ENCODE measurements at regions of chr22 and their contacts with region 1.

Region 1: GRCh38 chr22:33018232-33018864 is 39.8 kb downstream of the SYN3 start:
- DNase-seq: peak; percentile 29 to 51 (median 41)
- H3K4me3 ChIP-seq: no peak overlapping the region
- H3K27ac ChIP-seq: no peak overlapping the region
- H3K4me1 ChIP-seq: no peaks in the 10 kb centered on the region
- H3K27me3 ChIP-seq: peaks cover 0 to 5% (median 0%) of the 10 kb centered on the region in 5 experiments

Region 2: DNA sequence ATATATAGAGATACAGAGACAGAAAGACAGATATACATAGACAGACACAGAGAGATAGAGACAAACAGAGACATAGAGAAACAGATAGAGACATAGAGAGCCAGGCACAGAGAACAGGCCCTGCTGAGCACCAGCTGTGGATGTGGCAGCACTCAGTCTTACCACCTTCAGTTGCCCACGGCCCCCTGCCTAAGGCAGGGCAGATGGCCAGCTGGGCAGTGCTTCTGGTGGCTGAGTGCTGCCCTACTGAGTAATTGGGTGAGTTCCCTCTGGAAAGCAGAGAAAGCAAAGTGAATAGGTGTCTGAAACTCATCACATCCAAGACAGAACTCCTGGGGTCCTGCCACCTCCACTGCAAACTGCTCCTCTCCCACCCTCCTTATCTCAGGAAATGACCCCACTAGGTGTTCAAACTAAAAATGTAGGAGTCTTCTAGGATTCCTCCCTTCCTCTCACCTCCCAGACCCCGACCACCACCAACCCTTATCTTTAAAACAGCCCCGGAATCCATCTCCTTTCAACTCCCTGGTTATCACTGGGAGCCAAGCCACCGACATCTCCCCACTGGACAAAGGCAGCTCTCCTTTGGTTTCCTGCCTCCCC is 12.7 kb after region 1 on chr22:
- CTCF ChIA-PET with region 1: interaction called, 11 read pairs
- POLR2A ChIA-PET with region 1: no interaction called
- DNase-seq: no peak
- H3K4me3 ChIP-seq: no peak overlapping the region
- H3K27ac ChIP-seq: no peak overlapping the region
- H3K4me1 ChIP-seq: no peaks in the 10 kb centered on the region
- H3K27me3 ChIP-seq: peaks cover 0 to 6% (median 0%) of the 10 kb centered on the region in 5 experiments

Region 3: GRCh38 chr22:33044112-33044511 is 25.8 kb after region 1 on chr22:
- CTCF ChIA-PET with region 1: interaction called, 34 read pairs
- POLR2A ChIA-PET with region 1: interaction called, 3 read pairs
- DNase-seq: peak in 1 of 3 donors; percentile 29
- H3K4me3 ChIP-seq: no peak overlapping the region
- H3K27ac ChIP-seq: no peak overlapping the region
- H3K4me1 ChIP-seq: no peaks in the 10 kb centered on the region
- H3K27me3 ChIP-seq: no peaks in the 10 kb centered on the region

Region 4: DNA sequence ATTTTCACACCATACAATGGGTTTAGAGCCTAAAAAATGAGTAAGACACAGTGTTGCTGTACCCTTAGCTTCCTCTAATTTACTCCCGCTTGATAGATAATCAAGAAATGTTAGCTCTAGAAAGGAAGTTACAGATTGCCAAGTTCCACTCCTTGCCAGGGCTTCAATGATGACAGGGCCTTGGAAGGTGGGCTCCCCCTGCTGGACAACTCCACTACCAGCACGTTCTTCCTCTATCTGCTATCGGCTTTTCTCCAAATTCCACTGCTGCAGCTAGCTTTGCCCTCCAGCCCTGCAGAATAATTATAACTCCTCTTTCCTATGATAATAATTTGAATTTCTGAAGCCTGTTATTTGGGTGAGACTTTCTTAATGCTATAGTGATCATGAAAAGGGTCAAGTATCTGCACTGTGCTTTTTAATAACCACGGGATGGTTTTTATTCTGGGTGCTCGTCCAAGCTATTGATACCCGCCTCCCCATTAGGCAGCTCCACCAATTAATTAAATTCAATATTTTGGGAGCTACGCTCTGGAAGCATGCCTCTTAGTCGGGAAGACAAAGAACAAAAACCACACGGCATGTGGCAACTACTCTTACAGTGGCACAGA is 30.9 kb after region 1 on chr22:
- CTCF ChIA-PET with region 1: interaction called, 34 read pairs
- POLR2A ChIA-PET with region 1: interaction called, 3 read pairs
- DNase-seq: peak; percentile 79 to 91 (median 90)
- H3K4me3 ChIP-seq: no peak overlapping the region
- H3K27ac ChIP-seq: no peak overlapping the region
- H3K4me1 ChIP-seq: peaks cover 0 to 7% (median 3%) of the 10 kb centered on the region in 4 experiments
- H3K27me3 ChIP-seq: peaks cover 0 to 32% (median 12%) of the 10 kb centered on the region in 5 experiments

Region 5: GRCh38 chr22:33209930-33210784 is 191.8 kb after region 1 on chr22:
- CTCF ChIA-PET with region 1: interaction called, 17 read pairs
- POLR2A ChIA-PET with region 1: no interaction called
- DNase-seq: peak; percentile 29 to 60 (median 53)
- H3K4me3 ChIP-seq: no peak overlapping the region
- H3K27ac ChIP-seq: no peak overlapping the region
- H3K4me1 ChIP-seq: no peaks in the 10 kb centered on the region
- H3K27me3 ChIP-seq: peaks cover 0 to 7% (median 3%) of the 10 kb centered on the region in 5 experiments